Activated CD4-positive, alpha-beta memory T cell treated with anti-CD3 and anti-CD28 coated beads for 36 hours (primary cell): ENCODE measurements at regions of chr14 and their contacts with region 1.

Region 1: DNA sequence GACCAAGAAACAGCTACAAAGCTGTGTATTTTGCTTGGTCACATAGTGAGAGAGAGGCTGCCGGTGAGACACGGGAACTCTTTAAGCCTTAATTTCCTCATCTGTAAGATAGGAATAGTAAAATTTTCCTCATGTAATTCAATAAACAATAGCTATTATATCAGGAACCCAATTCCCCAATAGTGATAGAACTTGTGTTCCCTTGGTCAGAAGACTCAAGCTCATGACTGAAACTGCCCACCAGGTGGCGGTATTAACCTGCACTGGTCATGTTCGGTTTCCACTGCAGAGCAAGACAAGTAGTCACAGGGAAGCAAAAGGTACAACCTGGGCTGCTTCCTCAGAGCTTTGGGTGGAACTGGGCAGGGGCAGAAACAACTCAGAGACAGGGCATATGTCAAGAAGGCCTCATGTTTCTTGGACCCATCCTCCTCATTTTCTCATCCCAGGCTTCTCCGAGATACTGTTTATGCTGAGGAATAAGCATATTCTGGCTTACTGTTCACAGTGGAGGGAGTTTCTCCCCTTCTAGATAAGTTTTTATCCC is 4.2 kb upstream of the AJUBA start:
- DNase-seq: peak; percentile 92
- H3K4me3 Mint-ChIP-seq: no peak overlapping the region
- H3K27ac Mint-ChIP-seq: no peak overlapping the region
- H3K4me1 Mint-ChIP-seq: no peaks in the 10 kb centered on the region
- H3K27me3 Mint-ChIP-seq: no peaks in the 10 kb centered on the region

Region 2: DNA sequence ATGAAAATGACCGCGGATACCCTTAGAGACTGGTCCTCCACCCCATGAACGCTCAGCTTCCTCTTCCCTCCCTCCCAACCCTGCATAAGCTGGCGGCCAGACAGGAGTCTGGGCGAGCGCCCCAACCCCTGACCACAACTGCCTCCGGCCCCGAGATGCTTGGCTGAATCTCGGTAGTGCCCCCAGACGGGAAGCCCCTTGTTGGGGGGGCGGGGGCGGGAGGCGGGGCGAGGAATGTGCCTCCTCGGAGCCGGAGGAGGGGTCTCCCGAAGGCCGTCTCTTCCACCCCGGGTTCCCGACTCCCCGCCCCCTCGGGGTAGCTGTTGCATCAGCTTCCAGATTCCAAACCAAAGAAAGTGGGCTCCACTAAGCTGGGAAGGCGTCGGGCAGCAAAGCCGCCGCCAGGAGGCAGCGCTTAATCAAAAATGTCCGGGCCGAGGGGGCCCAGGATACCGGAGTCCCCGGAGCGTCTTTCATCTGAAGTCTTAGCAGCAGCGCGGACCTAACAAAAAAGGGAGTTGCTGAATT is 163.9 kb before region 1 on chr14:
- CTCF ChIA-PET with region 1: interaction called, 13 read pairs
- POLR2A ChIA-PET with region 1: no interaction called
- intact Hi-C with region 1: loop called (anchors 5 kb)
- DNase-seq: peak; percentile 77
- H3K4me3 Mint-ChIP-seq: peak overlapping the region; percentile 63
- H3K27ac Mint-ChIP-seq: no peak overlapping the region
- H3K4me1 Mint-ChIP-seq: peaks cover 26% of the 10 kb centered on the region
- H3K27me3 Mint-ChIP-seq: peaks cover 12% of the 10 kb centered on the region

Region 3: GRCh38 chr14:22955702-22956569 is 30.6 kb before region 1 on chr14:
- CTCF ChIA-PET with region 1: interaction called, 41 read pairs
- POLR2A ChIA-PET with region 1: no interaction called
- intact Hi-C with region 1: loop called (anchors 1 kb)
- DNase-seq: no peak
- H3K4me3 Mint-ChIP-seq: peak overlapping the region; percentile 88
- H3K27ac Mint-ChIP-seq: peak overlapping the region; percentile 85
- H3K4me1 Mint-ChIP-seq: peaks cover 16% of the 10 kb centered on the region
- H3K27me3 Mint-ChIP-seq: no peaks in the 10 kb centered on the region

Region 4: GRCh38 chr14:23000860-23001259 is 14.3 kb after region 1 on chr14:
- CTCF ChIA-PET with region 1: interaction called, 69 read pairs
- POLR2A ChIA-PET with region 1: interaction called, 5 read pairs
- intact Hi-C with region 1: no loop called
- DNase-seq: no peak
- H3K4me3 Mint-ChIP-seq: no peak overlapping the region
- H3K27ac Mint-ChIP-seq: no peak overlapping the region
- H3K4me1 Mint-ChIP-seq: peaks cover 12% of the 10 kb centered on the region
- H3K27me3 Mint-ChIP-seq: no peaks in the 10 kb centered on the region

Region 5: DNA sequence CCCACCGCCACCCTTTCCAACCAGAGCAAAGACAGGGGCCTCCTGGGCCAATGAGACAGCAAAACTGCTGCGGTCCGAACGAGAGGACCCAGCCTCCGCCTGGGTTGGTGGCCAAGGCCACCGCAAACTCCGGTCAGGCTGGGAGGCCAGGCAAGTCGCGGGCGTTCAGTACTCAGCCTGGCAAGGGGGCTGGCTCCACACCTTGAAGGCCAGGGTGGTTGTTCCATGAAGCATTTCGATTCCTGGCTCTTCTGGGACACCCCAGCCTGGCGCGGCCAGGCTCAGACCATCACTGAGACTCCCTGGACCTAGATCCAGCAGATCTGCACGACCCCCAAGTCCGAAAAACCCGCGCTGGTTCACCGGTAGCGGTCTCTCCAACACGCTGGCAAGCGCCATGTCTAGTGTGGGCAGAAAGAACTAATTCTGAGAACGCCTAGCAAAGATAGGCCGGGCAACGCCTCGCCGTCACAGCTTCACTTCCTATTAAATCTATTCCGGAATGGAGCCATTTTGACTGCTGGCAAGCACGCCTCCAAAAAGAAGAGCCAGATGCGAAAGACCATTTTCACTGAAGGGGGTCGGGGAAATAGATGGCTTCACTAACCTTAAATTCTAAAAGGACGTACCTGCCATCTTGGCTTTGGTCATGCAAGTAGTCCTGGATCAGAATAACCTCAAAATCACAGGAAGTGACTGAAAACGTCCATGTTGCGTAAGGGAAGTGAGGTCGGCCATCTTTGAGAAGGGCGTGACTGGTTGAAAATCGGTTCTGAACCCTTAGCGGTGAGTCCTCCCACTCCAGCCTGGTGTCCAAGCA is 48.1 kb after region 1 on chr14 and contains the start of gene PSMB5:
- CTCF ChIA-PET with region 1: interaction called, 13 read pairs
- POLR2A ChIA-PET with region 1: interaction called, 4 read pairs
- intact Hi-C with region 1: no loop called
- DNase-seq: peak; percentile 94
- H3K4me3 Mint-ChIP-seq: peak within 1 kb of the TSS; percentile 95
- H3K27ac Mint-ChIP-seq: peak within 1 kb of the TSS; percentile 95
- H3K4me1 Mint-ChIP-seq: peaks cover 28% of the 10 kb centered on the region
- H3K27me3 Mint-ChIP-seq: no peaks in the 10 kb centered on the region
- total RNA-seq, gene PSMB5: 116 to 119 TPM

Region 6: DNA sequence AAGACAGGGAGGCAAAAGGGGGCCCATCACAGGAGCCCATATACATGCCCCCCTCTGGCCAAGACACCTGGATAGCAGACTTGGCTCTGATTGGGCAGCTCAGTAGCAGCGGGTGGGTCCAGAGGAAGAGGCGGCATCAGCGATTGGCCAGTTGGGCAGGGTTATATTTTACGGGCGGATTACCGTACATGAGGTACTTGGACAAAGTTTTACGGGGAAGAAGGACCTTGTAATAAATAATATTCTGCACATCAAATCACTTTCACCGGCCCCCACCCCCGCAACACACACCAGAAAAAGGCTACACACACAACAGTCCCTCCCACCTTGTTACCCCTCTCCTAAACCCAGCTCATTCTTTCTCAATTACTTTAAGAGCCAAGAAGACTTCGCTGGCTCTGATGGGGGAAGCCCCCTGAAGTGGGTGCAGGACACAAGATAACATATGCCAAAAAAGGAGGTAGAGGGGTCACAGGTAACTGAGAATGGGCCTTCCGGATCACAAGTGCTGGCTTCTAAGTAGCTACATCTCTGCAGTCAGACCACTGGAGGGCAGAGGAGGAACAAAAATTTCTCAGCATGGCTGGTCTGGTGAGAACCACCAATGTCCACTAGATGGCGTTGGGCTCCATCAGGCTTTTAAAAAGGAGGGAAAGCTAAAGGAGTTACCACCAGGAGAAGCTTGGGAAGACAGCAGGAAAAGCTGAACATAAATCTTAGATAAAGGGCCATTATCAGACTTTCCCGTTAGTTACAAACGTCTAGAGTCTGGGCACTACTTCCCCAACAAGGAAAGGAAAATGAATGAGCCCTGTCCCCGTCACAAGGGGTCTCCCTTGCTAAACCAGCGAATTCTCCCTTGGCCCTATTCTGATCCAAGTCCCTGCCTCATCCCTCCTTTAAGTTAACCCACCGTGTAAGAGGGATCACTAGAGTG is 82.2 kb after region 1 on chr14:
- CTCF ChIA-PET with region 1: interaction called, 839 read pairs
- POLR2A ChIA-PET with region 1: no interaction called
- intact Hi-C with region 1: no loop called
- DNase-seq: peak; percentile 82
- H3K4me3 Mint-ChIP-seq: no peak overlapping the region
- H3K27ac Mint-ChIP-seq: peak overlapping the region; percentile 66
- H3K4me1 Mint-ChIP-seq: peaks cover 42% of the 10 kb centered on the region
- H3K27me3 Mint-ChIP-seq: no peaks in the 10 kb centered on the region

Region 7: GRCh38 chr14:23186913-23187654 is 200.5 kb after region 1 on chr14:
- CTCF ChIA-PET with region 1: interaction called, 4 read pairs
- POLR2A ChIA-PET with region 1: no interaction called
- intact Hi-C with region 1: loop called (anchors 10 kb)
- DNase-seq: peak; percentile 34
- H3K4me3 Mint-ChIP-seq: no peak overlapping the region
- H3K27ac Mint-ChIP-seq: no peak overlapping the region
- H3K4me1 Mint-ChIP-seq: no peaks in the 10 kb centered on the region
- H3K27me3 Mint-ChIP-seq: no peaks in the 10 kb centered on the region

Region 8: DNA sequence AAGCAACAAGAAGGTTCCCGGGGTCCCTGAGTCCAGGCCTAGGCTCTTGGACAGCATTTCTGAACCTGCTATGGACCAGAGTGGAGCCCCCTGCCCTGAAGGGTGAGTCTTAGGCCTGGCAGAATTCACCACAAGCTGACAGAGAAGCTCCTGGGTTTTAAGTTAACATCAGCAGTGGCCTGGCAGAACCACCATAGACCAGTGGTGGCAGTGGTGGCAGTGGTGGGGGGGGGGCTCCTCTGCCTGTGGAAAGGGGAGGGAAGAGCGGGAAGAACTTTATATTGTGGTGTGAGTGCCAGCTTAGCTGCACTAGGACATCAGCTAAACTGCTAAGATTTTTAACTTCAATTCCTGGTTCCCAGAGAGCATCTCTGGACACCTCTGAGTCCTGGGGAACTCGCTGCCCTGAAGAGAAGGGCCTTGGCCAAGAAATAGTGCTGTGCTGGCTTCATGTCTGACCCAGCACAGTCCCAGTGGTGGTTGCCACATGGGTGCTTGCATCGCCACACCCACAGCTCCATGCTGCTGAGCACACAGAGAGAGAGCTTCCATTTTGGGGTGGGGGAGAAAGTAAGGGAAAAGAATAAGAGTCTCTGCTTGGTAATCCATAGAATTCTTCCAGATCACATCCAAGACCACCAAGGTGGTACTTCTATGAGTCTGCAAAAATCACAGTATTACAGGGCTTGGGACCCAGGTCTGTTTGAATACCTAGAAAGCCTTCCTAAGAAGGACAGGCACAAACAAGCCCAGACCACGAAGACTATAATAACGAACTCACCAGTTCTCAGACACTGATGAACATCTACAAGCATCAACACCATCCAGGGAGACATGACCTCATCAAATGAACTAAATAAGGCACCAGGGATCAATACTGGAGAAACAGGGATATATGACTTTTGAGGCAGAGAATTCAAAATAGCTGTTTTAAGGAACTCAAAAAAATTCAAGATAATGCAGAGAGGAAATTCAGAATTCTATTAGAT is 230.7 kb after region 1 on chr14:
- CTCF ChIA-PET with region 1: no interaction called
- POLR2A ChIA-PET with region 1: no interaction called
- intact Hi-C with region 1: no loop called
- DNase-seq: no peak
- H3K4me3 Mint-ChIP-seq: no peak overlapping the region
- H3K27ac Mint-ChIP-seq: no peak overlapping the region
- H3K4me1 Mint-ChIP-seq: no peaks in the 10 kb centered on the region
- H3K27me3 Mint-ChIP-seq: peaks cover 12% of the 10 kb centered on the region